ENCODE measurements at regions of chr7 and their contacts with region 1.

Region 1: DNA sequence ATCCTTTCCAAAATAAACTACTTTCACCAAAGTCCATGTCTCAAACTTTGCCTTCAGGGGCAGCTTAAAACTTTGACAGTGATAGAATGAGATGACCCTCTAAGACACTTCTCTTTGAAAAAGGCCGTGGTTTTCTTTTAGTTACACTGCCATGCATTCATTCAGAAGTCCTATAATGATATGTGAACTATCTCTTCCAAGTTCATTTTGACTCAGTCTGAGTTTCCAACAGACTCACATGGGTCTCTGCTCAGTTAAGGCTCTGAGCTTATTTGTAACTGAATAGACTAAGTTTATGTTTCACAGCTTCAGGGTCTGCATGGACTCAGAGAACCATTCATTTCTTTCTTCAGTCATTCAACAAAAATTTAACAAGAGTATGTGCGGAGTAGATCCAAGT is 208.9 kb upstream of the PRSS1 start:
- DNase-seq: no peak
- H3K4me3 Mint-ChIP-seq: no peak overlapping the region
- H3K27ac Mint-ChIP-seq: peak overlapping the region; percentile 73
- H3K4me1 Mint-ChIP-seq: peaks cover 38% of the 10 kb centered on the region
- H3K27me3 Mint-ChIP-seq: no peaks in the 10 kb centered on the region

Region 2: GRCh38 chr7:142557971-142558582 is 17.7 kb after region 1 on chr7:
- CTCF ChIA-PET with region 1: interaction called, 28 read pairs
- DNase-seq: peak; percentile 70
- H3K4me3 Mint-ChIP-seq: peak overlapping the region; percentile 39
- H3K27ac Mint-ChIP-seq: no peak overlapping the region
- H3K4me1 Mint-ChIP-seq: peaks cover 17% of the 10 kb centered on the region
- H3K27me3 Mint-ChIP-seq: peaks cover 43% of the 10 kb centered on the region

Measured in activated naive CD4-positive, alpha-beta T cell treated with anti-CD3 and anti-CD28 coated beads, Interleukin-2, amount 10 ng/mL, durations not matched to agents 7 days and 5 days (primary cell).